AG04449 (cell line): ENCODE measurements at regions of chr2 and their contacts with region 1.

Region 1: DNA sequence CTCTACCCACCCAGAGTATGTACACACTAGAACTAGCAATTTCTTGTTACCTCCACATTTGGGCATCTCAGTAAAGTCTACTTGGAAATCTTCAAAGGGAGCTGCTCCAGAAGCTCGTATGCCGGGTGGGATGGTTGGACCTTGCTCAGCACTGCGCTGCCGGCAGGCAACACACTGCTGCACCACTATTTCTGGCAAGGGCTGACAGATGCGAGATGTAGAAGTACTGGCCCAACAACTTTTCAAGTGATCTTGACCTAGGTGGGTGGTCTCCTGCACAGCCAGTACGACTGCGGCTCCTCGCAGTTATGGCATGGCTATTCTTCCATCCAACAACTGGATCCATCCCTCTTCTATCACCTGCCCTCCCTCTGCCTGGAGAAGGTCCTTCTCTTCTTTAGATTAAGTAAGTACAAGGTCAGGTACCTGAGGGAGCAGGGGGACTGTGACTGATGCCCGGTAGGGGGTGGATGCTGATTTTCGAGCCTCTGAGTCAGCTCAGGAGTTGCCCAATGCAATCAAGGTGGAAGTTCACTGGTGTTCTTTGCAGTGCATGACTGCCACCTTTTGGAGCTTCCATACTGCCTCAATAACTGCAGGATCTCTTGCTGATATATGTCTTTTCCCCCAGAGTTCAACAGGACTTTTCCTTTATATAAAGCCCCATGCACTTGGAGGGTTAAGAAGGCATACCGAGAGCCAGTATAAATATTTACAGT is 100.4 kb upstream of the SLC1A4 start:
- DNase-seq: no peak
- H3K4me3 ChIP-seq: no peak overlapping the region
- CTCF ChIP-seq: peak; percentile 42

Region 2: GRCh38 chr2:64873472-64873924 is 15.3 kb before region 1 on chr2:
- CTCF ChIA-PET with region 1: interaction called, 12 read pairs
- POLR2A ChIA-PET with region 1: no interaction called
- DNase-seq: no peak
- H3K4me3 ChIP-seq: no peak overlapping the region; the same call in 1 of the 2 replicates
- CTCF ChIP-seq: peak; percentile 97